GM12878 (cell line): ENCODE measurements at regions of chr3 and their contacts with region 1.

Region 1: DNA sequence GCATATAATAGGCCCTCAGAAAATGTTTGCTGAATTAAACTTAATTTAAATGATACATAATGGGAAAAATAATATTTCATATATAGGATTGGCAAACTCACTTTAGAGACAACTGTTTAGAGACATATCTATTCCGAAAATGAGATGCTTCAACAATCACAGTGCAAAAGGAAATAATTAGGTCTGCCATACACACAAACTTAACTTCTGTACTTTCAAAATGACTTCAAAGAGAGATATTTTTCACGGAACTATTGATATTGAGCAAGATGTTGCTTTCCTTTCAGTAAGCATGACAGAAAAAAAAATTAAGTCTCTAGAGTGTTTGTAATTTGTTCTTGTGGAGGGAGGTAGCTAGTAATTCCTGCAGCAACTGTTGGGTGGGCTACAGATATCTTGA is 769.5 kb downstream of the TUSC7 start:
- DNase-seq: peak; percentile 48
- ATAC-seq: peak; percentile 95
- H3K4me3 ChIP-seq: no peak overlapping the region
- H3K27ac ChIP-seq: no peak overlapping the region
- H3K4me1 ChIP-seq: no peaks in the 10 kb centered on the region
- H3K27me3 ChIP-seq: no peaks in the 10 kb centered on the region
- CTCF ChIP-seq: no peak
- EP300 ChIP-seq: peak; percentile 91 to 93
- POLR2A ChIP-seq: no peak
- RAD21 ChIP-seq: no peak

Region 2: GRCh38 chr3:117407317-117407716 is 71.8 kb before region 1 on chr3:
- CTCF ChIA-PET with region 1: interaction called, 8 read pairs
- POLR2A ChIA-PET with region 1: no interaction called
- RAD21 ChIA-PET with region 1: interaction called, 6 read pairs
- SMC1A ChIA-PET with region 1: interaction called, 15 read pairs
- in situ Hi-C with region 1: no loop called
- intact Hi-C with region 1: no loop called
- DNase-seq: no peak
- ATAC-seq: peak; percentile 91
- H3K4me3 ChIP-seq: no peak overlapping the region
- H3K27ac ChIP-seq: no peak overlapping the region
- H3K4me1 ChIP-seq: no peaks in the 10 kb centered on the region
- H3K27me3 ChIP-seq: no peaks in the 10 kb centered on the region; a peak in 1 of 4 replicates
- CTCF ChIP-seq: peak; percentile 27 to 61 (median 42); a peak in 5 of 6 replicates
- EP300 ChIP-seq: no peak
- POLR2A ChIP-seq: no peak
- RAD21 ChIP-seq: peak; percentile 40; the same call in 1 of the 2 replicates

Region 3: DNA sequence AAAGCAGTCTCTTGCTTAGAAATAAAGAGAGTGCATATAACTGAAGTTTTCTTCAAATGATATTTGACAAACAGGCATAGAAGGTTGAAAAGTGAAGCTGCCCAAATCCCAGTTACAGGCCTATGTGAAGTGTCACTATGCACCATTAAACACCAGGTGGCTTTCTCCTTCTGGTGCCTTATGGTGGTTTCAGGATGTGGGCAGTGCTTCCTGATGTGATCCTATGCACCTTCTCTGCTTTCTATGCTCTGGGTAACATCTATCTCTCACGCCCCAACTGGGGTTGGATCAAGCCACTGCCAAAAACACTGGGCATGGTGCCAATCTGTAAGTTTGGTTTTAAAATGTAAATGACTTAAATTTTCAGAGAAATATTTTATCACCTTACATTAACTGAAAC is 24.8 kb before region 1 on chr3:
- CTCF ChIA-PET with region 1: interaction called, 3 read pairs
- POLR2A ChIA-PET with region 1: interaction called, 5 read pairs
- RAD21 ChIA-PET with region 1: interaction called, 6 read pairs
- SMC1A ChIA-PET with region 1: interaction called, 10 read pairs
- in situ Hi-C with region 1: no loop called
- intact Hi-C with region 1: no loop called
- DNase-seq: no peak
- ATAC-seq: peak; percentile 59
- H3K4me3 ChIP-seq: no peak overlapping the region
- H3K27ac ChIP-seq: no peak overlapping the region
- H3K4me1 ChIP-seq: no peaks in the 10 kb centered on the region
- H3K27me3 ChIP-seq: peaks cover 0 to 2% of the 10 kb centered on the region in 2 experiments; a peak in 1 of 4 replicates
- CTCF ChIP-seq: no peak; a peak in 1 of 6 replicates
- EP300 ChIP-seq: no peak
- POLR2A ChIP-seq: no peak
- RAD21 ChIP-seq: no peak

Region 4: DNA sequence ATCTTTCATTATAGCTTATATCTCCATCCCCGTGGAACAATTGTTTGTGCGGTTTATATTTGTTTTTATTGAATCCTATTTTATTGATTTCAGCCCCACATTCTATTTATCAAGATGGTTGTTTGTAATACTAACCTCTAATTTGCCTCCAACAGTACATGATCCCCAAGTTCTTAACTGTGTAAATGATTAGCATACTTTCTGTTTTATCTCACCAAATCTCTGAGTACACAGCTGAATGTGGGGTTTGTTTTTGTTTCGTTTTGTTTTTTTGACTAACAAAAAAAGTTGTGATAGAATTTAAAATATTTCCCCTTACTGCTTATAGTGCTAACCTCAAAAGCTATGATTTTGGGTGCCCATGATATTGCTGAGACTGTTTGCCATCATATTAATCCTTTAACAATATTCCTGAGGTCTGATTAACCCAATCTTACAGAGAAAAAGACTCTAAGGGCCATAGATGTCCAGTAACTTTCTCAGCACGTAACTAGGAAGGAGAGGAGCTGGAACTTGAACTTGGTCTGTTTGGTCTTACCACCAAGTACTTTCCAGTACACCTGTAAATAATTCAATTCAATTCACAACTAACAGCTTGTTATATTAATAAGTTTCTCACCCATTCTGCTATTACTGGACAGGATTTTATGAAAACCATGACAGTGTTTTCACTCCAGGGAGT is 20.2 kb after region 1 on chr3:
- CTCF ChIA-PET with region 1: interaction called, 4 read pairs
- POLR2A ChIA-PET with region 1: no interaction called
- RAD21 ChIA-PET with region 1: interaction called, 4 read pairs
- SMC1A ChIA-PET with region 1: interaction called, 30 read pairs
- in situ Hi-C with region 1: no loop called
- intact Hi-C with region 1: no loop called
- DNase-seq: no peak
- ATAC-seq: peak; percentile 76
- H3K4me3 ChIP-seq: no peak overlapping the region
- H3K27ac ChIP-seq: no peak overlapping the region
- H3K4me1 ChIP-seq: no peaks in the 10 kb centered on the region
- H3K27me3 ChIP-seq: no peaks in the 10 kb centered on the region
- CTCF ChIP-seq: no peak
- EP300 ChIP-seq: no peak
- POLR2A ChIP-seq: no peak
- RAD21 ChIP-seq: no peak

Region 5: GRCh38 chr3:117510396-117510795 is 31.3 kb after region 1 on chr3:
- CTCF ChIA-PET with region 1: interaction called, 6 read pairs
- POLR2A ChIA-PET with region 1: interaction called, 3 read pairs
- RAD21 ChIA-PET with region 1: interaction called, 4 read pairs
- SMC1A ChIA-PET with region 1: interaction called, 12 read pairs
- in situ Hi-C with region 1: no loop called
- intact Hi-C with region 1: no loop called
- DNase-seq: no peak
- ATAC-seq: no peak
- H3K4me3 ChIP-seq: no peak overlapping the region
- H3K27ac ChIP-seq: no peak overlapping the region
- H3K4me1 ChIP-seq: no peaks in the 10 kb centered on the region
- H3K27me3 ChIP-seq: no peaks in the 10 kb centered on the region
- CTCF ChIP-seq: no peak
- EP300 ChIP-seq: no peak
- POLR2A ChIP-seq: no peak
- RAD21 ChIP-seq: no peak